ENCODE measurements at regions of chr10 and their contacts with region 1.

Region 1: DNA sequence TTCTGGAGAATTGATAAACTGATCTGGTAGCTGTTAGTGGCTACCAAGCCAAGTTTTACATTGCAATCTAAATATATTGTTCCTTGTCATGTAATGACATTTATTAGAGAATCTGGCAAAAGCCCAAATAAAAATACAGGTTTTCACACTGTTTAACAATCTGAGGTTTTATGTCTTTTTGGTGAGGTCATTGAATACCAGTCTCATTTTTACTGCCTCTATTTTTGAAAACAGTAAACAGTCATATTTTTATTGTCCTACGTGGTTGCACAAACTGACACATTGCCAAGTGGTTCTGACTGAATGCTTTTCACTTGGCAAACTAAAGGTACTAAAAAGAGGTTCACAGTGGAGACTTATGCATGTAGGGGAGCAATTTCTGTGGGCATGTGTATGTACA is 157.5 kb downstream of the PRKG1 start:
- DNase-seq: no peak
- H3K4me3 ChIP-seq: no peak overlapping the region
- H3K27ac ChIP-seq: no peak overlapping the region
- H3K4me1 ChIP-seq: peaks cover 34 to 39% (median 39%) of the 10 kb centered on the region in 4 donors
- H3K27me3 ChIP-seq: no peaks in the 10 kb centered on the region
- CTCF ChIP-seq: no peak
- EP300 ChIP-seq: no peak
- POLR2A ChIP-seq: no peak

Region 2: GRCh38 chr10:51074238-51075028 is 157.3 kb before region 1 on chr10 and contains the start of gene PRKG1:
- intact Hi-C with region 1: loop called (anchors 10 kb)
- DNase-seq: peak; percentile 96
- H3K4me3 ChIP-seq: peak within 1 kb of the TSS; percentile 63 to 74 (median 70)
- H3K27ac ChIP-seq: peak within 1 kb of the TSS; percentile 86 to 93 (median 92)
- H3K4me1 ChIP-seq: peaks cover 12 to 47% (median 42%) of the 10 kb centered on the region in 4 donors
- H3K27me3 ChIP-seq: no peaks in the 10 kb centered on the region
- CTCF ChIP-seq: no peak
- EP300 ChIP-seq: no peak
- POLR2A ChIP-seq: no peak
- total RNA-seq, gene PRKG1: 24.5 to 46.1 (median 37.1) TPM

Region 3: DNA sequence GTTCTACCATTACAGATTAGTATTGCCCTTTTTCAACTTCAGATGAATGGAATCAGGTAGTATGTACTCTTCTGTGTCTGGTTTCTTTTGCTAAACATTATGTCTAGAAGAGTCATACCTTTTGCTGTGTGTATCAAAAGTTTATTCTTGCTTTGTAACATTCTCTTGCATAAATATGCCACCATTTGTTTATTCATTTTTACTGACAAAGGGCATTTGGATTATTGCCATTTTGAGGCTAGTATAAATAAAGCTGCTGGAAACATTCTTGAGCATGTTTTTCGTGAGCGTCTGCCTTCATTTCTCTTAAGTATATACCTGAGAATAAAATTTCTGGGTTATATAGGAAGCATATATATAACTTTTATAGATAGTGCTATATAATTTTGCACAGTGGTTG is 589.3 kb after region 1 on chr10:
- intact Hi-C with region 1: no loop called
- DNase-seq: no peak
- H3K4me3 ChIP-seq: no peak overlapping the region
- H3K27ac ChIP-seq: no peak overlapping the region
- H3K4me1 ChIP-seq: peaks cover 0 to 12% (median 6%) of the 10 kb centered on the region in 4 donors
- H3K27me3 ChIP-seq: no peaks in the 10 kb centered on the region
- CTCF ChIP-seq: no peak
- EP300 ChIP-seq: no peak
- POLR2A ChIP-seq: no peak